ENCODE measurements at regions of chr1 and their contacts with region 1.

Region 1: GRCh38 chr1:39816415-39817090 is 27.9 kb upstream of the BMP8B start:
- DNase-seq: peak; percentile 91
- H3K4me3 Mint-ChIP-seq: no peak overlapping the region
- H3K27ac Mint-ChIP-seq: no peak overlapping the region
- H3K4me1 Mint-ChIP-seq: peaks cover 13% of the 10 kb centered on the region
- H3K27me3 Mint-ChIP-seq: peaks cover 10% of the 10 kb centered on the region

Region 2: GRCh38 chr1:38859561-38860453 is 956.7 kb before region 1 on chr1 and contains the start of gene RRAGC:
- intact Hi-C with region 1: no loop called
- DNase-seq: peak; percentile 100
- H3K4me3 Mint-ChIP-seq: peak within 1 kb of the TSS; percentile 88
- H3K27ac Mint-ChIP-seq: peak within 1 kb of the TSS; percentile 77
- H3K4me1 Mint-ChIP-seq: peaks cover 24% of the 10 kb centered on the region
- H3K27me3 Mint-ChIP-seq: no peaks in the 10 kb centered on the region
- total RNA-seq, gene RRAGC: 10.9 and 11.0 TPM in 2 replicates

Region 3: DNA sequence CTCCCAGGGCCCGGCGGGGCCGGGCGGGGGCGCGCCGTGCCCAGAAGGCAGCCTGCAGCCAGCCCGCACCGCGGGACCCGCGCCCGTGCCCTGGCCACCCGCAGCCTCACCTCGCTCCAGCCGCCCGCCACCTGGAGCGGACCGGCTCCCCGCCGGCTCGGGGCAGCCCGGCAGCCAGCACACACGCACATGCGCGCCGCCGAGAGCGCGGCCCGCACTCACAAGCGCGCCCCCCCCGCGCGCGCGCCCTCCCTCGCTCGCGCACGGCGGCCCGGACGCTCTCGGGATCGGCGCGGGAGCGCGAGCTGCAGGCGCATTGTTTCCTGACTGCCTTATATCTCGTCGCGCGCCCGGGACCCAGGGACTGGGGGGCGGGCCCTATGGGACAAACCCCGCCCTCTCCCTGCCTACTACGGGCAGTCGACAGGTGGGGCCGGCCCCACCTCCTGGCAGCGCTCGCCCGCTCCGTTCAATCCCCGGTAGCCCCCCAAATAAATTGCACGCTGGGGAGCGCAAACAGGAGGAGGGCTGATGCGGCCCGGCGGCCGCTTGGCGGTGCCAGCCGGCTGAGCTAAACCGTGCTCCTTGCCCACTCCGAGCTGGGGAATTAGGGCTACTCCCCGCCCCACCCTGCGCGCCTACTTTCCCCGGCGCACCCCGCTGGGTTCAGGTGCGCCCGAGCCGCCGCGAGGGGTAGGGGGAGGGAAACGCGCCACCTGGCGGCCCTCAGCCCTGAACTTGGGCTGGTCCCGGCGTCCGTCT is 85.3 kb after region 1 on chr1 and contains the start of gene MYCL:
- intact Hi-C with region 1: loop called (anchors 1 kb)
- DNase-seq: peak; percentile 91
- H3K4me3 Mint-ChIP-seq: peak within 1 kb of the TSS; percentile 79
- H3K27ac Mint-ChIP-seq: no peak within 1 kb of the TSS
- H3K4me1 Mint-ChIP-seq: peaks cover 6% of the 10 kb centered on the region
- H3K27me3 Mint-ChIP-seq: peaks cover 65% of the 10 kb centered on the region
- total RNA-seq, gene MYCL: 0.42 and 0.57 TPM in 2 replicates

Region 4: GRCh38 chr1:39973503-39974135 is 157.1 kb after region 1 on chr1:
- intact Hi-C with region 1: loop called (anchors 2 kb)
- DNase-seq: peak; percentile 91
- H3K4me3 Mint-ChIP-seq: no peak overlapping the region
- H3K27ac Mint-ChIP-seq: no peak overlapping the region
- H3K4me1 Mint-ChIP-seq: peaks cover 5% of the 10 kb centered on the region
- H3K27me3 Mint-ChIP-seq: no peaks in the 10 kb centered on the region

Measured in activated CD4-positive, alpha-beta T cell treated with anti-CD3 and anti-CD28 coated beads, Interleukin-2, amount 10 ng/mL, durations not matched to agents 24 days and 14 days (primary cell).